WTC11 (cell line): ENCODE measurements at regions of chr12 and their contacts with region 1.

Region 1: GRCh38 chr12:132194056-132194455 is 49.8 kb downstream of the NOC4L start:
- DNase-seq: peak; percentile 61
- ATAC-seq: no peak
- H3K4me3 Mint-ChIP-seq: no peak overlapping the region
- H3K27ac Mint-ChIP-seq: no peak overlapping the region
- H3K4me1 Mint-ChIP-seq: peaks cover 3% of the 10 kb centered on the region
- H3K27me3 Mint-ChIP-seq: peaks cover 57% of the 10 kb centered on the region
- CTCF ChIP-seq: peak; percentile 79

Region 2: DNA sequence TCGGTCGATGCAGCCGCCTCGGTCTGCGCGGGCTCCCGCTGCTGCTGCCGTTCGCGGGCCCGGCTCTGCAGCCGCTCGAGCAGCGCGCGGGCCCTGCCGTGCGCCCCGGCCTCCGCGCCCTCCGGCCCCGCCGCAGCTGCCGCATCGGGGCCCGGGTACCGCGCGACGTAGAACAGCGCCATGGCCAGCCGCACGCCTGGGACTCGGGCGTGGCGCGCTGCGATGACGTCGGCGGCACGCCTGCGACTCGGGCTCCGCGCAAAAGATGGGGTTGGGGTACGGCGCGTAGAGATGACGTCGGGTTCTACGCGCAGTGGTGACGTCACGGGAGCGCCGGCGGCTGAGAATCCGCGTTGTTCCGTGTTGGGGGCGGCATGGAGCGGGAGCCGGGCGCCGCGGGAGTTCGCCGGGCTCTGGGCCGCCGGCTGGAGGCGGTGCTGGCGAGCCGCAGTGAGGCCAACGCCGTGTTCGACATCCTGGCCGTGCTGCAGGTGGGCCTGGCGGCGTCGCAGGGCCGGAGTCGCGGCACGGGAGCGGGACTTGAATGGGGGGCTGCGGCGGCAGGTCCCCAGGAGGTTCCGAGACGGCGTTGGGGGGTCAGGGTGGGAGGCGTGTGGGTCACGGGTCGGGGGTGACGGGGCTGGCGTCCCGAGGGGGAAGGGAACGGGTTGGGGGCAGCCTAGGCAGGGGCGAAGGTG is 49.8 kb before region 1 on chr12 and contains the starts of genes DDX51 and NOC4L:
- CTCF ChIA-PET with region 1: no interaction called
- POLR2A ChIA-PET with region 1: no interaction called
- DNase-seq: peak; percentile 94
- ATAC-seq: peak; percentile 79
- H3K4me3 Mint-ChIP-seq: peak within 1 kb of the TSS; percentile 78
- H3K27ac Mint-ChIP-seq: peak within 1 kb of the TSS; percentile 60; the same call in 1 of the 2 replicates
- H3K4me1 Mint-ChIP-seq: peaks cover 10% of the 10 kb centered on the region
- H3K27me3 Mint-ChIP-seq: no peaks in the 10 kb centered on the region
- CTCF ChIP-seq: no peak
- total RNA-seq, gene DDX51: 32.7 to 34.2 TPM (median 33.3 TPM) in 3 replicates
- total RNA-seq, gene NOC4L: 38.0 to 41.4 TPM (median 39.6 TPM) in 3 replicates

Region 3: DNA sequence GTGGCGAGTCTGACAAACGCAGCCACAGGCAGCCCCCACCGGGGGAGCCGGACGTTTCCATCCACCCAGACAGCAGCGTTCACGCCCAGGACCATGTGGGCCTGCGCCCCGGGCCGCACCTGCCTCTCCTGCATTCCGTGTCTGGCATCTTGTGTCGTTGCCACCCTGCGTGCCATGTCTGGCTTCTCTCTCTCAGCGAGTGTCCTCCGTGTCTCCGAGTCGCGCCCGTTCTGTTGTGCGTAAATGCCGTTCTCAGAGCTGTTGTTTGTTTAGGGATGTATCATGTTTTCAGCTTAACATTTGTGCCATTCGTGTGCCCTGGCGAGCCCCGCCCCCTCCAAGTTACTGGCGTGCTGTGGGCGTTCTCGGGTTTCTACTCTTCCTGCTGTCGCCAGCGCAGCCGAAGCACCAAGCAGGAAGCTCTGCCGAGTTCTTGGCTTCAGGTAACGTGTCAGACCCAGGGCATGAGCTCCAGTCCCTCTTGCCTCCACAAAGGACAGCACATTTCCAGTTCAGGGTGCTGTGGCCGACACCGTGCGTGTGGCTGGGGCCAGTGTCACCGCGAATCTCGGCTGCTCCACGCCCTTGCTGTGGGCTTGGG is 15.2 kb before region 1 on chr12:
- CTCF ChIA-PET with region 1: interaction called, 11 read pairs
- POLR2A ChIA-PET with region 1: no interaction called
- DNase-seq: peak; percentile 58
- ATAC-seq: peak; percentile 65
- H3K4me3 Mint-ChIP-seq: no peak overlapping the region
- H3K27ac Mint-ChIP-seq: no peak overlapping the region
- H3K4me1 Mint-ChIP-seq: peaks cover 8% of the 10 kb centered on the region
- H3K27me3 Mint-ChIP-seq: peaks cover 61% of the 10 kb centered on the region
- CTCF ChIP-seq: 0 out of 2 replicates have a peak, but pooled peaks have one; percentile 26

Region 4: DNA sequence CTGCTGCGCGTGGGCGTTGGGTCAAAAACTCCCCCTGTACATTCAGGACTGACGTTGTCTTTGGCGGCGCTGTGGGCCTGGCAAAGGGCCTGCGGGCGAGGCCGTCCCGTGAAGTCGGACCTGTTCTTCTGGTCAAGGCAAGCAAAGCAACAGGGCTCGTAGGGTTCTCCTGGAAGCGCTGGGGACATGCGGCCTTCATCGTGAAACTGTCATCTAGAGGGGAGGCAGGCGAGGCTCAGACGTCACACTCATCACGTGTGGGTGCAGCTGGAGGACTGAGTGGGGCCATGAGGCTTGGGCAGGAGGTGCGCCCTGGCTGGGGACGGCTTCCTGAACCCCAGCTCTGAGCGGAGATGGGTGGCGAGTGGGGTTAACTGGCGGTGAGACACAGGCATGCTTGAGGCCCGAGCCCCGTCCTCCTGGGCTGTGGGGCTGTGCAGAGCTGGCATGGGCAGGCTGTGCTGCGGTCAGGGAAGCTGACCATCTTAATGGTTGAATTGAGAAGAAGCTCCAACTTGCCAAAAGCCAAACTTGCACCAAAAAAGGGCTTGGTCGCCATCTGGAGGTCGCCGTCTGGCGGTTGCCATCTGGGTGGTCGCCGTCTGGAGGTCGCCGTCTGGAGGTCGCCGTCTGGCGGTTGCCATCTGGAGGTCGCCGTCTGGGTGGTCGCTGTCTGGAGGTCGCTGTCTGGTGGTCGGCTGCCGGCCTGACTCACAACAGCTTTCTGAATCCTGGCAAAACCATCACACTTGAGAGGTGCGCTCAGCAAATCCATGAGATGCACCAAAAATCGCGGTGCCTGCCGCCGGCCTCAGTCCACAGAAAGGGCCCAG is 16.4 kb after region 1 on chr12:
- CTCF ChIA-PET with region 1: interaction called, 10 read pairs
- POLR2A ChIA-PET with region 1: no interaction called
- DNase-seq: peak; percentile 70
- ATAC-seq: peak; percentile 62
- H3K4me3 Mint-ChIP-seq: no peak overlapping the region
- H3K27ac Mint-ChIP-seq: no peak overlapping the region; the same call in 1 of the 2 replicates
- H3K4me1 Mint-ChIP-seq: no peaks in the 10 kb centered on the region
- H3K27me3 Mint-ChIP-seq: peaks cover 65% of the 10 kb centered on the region
- CTCF ChIP-seq: no peak